Activated CD8-positive, alpha-beta memory T cell treated with anti-CD3 and anti-CD28 coated beads, Interleukin-2, amount 10 ng/mL, durations not matched to agents 7 days and 5 days (primary cell): ENCODE measurements at regions of chr10 and their contacts with region 1.

Region 1: GRCh38 chr10:35195361-35196306 is 69.0 kb downstream of the CREM start:
- DNase-seq: peak; percentile 92
- ATAC-seq: peak; percentile 86
- H3K4me3 Mint-ChIP-seq: peak overlapping the region; percentile 89
- H3K27ac Mint-ChIP-seq: peak overlapping the region; percentile 100
- H3K4me1 Mint-ChIP-seq: peaks cover 52% of the 10 kb centered on the region
- H3K27me3 Mint-ChIP-seq: no peaks in the 10 kb centered on the region

Region 2: DNA sequence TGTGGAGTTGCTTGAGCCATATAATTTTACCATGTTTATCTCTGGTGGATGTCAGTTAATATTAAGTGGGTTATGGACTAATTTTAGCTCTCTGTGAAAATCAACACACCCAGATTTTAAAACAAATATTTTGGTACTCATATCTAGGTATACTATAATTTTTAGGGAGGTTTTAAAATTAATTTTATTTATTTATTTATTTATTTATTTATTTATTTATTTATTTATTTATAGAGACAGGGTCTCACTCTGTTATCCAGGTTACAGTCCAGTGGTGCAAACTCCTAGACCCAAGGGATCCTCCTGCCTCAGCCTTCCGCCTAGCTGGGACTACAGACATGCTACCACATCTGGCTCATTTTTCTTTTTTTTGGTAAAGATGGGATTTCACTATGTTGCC is 76.3 kb before region 1 on chr10:
- CTCF ChIA-PET with region 1: interaction called, 19 read pairs
- DNase-seq: no peak
- ATAC-seq: no peak
- H3K4me3 Mint-ChIP-seq: no peak overlapping the region
- H3K27ac Mint-ChIP-seq: no peak overlapping the region
- H3K4me1 Mint-ChIP-seq: peaks cover 13% of the 10 kb centered on the region
- H3K27me3 Mint-ChIP-seq: peaks cover 10% of the 10 kb centered on the region

Region 3: GRCh38 chr10:35126530-35127296 is 68.9 kb before region 1 on chr10 and contains the start of gene CREM:
- CTCF ChIA-PET with region 1: interaction called, 208 read pairs
- DNase-seq: peak; percentile 99
- ATAC-seq: peak; percentile 79
- H3K4me3 Mint-ChIP-seq: peak within 1 kb of the TSS; percentile 97
- H3K27ac Mint-ChIP-seq: peak within 1 kb of the TSS; percentile 95
- H3K4me1 Mint-ChIP-seq: peaks cover 46% of the 10 kb centered on the region
- H3K27me3 Mint-ChIP-seq: no peaks in the 10 kb centered on the region
- total RNA-seq, gene CREM: 102 to 192 TPM

Region 4: GRCh38 chr10:35150308-35150707 is 45.3 kb before region 1 on chr10:
- CTCF ChIA-PET with region 1: interaction called, 18 read pairs
- DNase-seq: no peak
- ATAC-seq: no peak
- H3K4me3 Mint-ChIP-seq: peak overlapping the region; percentile 38
- H3K27ac Mint-ChIP-seq: peak overlapping the region; percentile 80
- H3K4me1 Mint-ChIP-seq: peaks cover 56% of the 10 kb centered on the region
- H3K27me3 Mint-ChIP-seq: no peaks in the 10 kb centered on the region

Region 5: GRCh38 chr10:35208536-35208935 is 12.9 kb after region 1 on chr10:
- CTCF ChIA-PET with region 1: interaction called, 76 read pairs
- DNase-seq: peak; percentile 89
- ATAC-seq: peak; percentile 94
- H3K4me3 Mint-ChIP-seq: peak overlapping the region; percentile 61
- H3K27ac Mint-ChIP-seq: peak overlapping the region; percentile 90
- H3K4me1 Mint-ChIP-seq: peaks cover 62% of the 10 kb centered on the region
- H3K27me3 Mint-ChIP-seq: no peaks in the 10 kb centered on the region

Region 6: DNA sequence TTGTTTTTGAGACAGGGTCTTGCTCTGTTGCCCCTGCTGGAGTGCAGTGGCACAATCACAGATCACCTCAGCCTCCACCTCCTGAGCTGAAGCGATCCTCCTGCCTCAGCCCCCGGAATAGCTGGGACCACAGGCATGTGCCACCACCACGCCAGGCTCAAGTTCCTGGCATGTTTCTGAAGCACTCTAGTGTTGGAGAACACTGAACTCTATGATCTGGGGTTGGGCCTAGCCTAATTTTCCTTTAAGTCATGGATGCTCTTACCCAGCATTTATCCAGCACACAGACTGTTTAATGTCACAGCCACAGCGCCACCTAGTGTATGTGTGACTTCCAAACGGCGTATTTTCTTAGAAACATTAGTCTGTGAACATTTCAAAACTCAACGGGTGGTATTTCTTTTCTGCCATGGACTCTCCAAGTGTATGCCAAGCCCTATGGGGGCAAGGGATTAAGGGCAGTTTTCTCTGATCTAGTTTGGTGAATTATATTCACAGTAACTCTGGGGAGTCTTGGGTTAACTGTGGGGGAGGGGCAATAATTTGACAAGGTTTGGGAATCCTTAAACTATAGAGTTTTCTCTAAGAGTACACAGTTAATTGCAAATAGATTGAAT is 22.8 kb after region 1 on chr10:
- CTCF ChIA-PET with region 1: interaction called, 60 read pairs
- DNase-seq: peak; percentile 92
- ATAC-seq: peak; percentile 84
- H3K4me3 Mint-ChIP-seq: peak overlapping the region; percentile 46
- H3K27ac Mint-ChIP-seq: peak overlapping the region; percentile 81
- H3K4me1 Mint-ChIP-seq: peaks cover 51% of the 10 kb centered on the region
- H3K27me3 Mint-ChIP-seq: no peaks in the 10 kb centered on the region